ENCODE measurements at regions of chrX and their contacts with region 1.

Region 1: DNA sequence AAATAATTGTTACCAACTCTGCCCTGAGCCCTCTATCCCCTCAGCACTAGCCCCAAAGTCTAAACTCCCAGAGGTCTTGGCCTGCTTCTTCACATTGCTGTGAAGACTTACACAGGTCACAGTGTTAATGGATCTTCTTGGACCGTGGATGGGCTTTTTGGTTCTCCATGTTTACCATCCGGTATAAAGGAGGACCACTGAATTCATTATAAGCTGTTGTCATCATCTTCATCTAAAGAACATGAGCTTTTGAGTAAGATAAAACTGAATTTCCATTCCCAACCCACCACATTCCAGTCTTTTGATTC is 8.5 kb downstream of the NUDT11 start:
- DNase-seq: no peak
- ATAC-seq: no peak
- H3K4me3 ChIP-seq: no peak overlapping the region
- H3K27ac ChIP-seq: no peak overlapping the region
- H3K4me1 ChIP-seq: no peaks in the 10 kb centered on the region
- H3K27me3 ChIP-seq: no peaks in the 10 kb centered on the region
- CTCF ChIP-seq: peak in 1 of 3 experiments; percentile 3; a peak in 1 of 6 replicates
- EP300 ChIP-seq: no peak
- POLR2A ChIP-seq: no peak
- RAD21 ChIP-seq: no peak

Region 2: DNA sequence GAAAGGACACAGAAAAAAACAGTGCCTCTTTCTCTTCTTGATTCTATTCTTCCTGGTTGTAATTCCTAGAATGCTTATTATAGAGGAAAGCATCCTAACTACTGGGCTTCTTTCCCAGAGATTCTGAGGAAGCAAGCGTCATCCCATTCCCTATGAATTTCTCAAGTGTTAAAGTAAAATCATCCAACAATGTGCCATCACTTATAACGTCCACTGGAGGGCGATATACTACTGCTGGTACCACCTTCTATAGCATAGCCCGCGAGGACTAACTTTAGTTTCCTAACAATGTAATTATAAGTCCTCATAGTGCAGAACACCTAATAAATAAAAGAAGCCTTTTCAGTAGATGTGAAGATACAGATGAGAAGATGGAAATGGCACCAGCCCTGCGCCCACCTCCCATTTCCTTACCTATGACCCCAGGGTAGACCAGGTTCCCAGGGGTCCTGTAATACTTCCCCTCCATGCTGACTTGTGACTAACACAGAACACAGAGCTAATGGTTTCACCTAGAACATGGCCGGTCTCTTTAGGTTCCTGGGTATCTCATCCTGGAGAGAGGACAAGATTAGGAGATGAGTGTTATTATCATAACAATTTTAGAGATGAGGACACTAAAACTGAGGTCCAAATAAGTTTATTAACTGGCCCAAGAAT is 126.6 kb after region 1 on chrX:
- CTCF ChIA-PET with region 1: no interaction called
- POLR2A ChIA-PET with region 1: no interaction called
- in situ Hi-C with region 1: no loop called
- intact Hi-C with region 1: loop called (anchors 10 kb)
- DNase-seq: peak; percentile 17 to 30 (median 24)
- ATAC-seq: peak; percentile 71
- H3K4me3 ChIP-seq: no peak overlapping the region
- H3K27ac ChIP-seq: no peak overlapping the region
- H3K4me1 ChIP-seq: no peaks in the 10 kb centered on the region
- H3K27me3 ChIP-seq: no peaks in the 10 kb centered on the region
- CTCF ChIP-seq: peak; percentile 26 to 64 (median 60); a peak in 5 of 6 replicates
- EP300 ChIP-seq: no peak
- POLR2A ChIP-seq: no peak
- RAD21 ChIP-seq: peak; percentile 37 to 64